CD8-positive, alpha-beta T cell (primary cell): ENCODE measurements at regions of chr1 and their contacts with region 1.

Region 1: GRCh38 chr1:181189691-181190363 is 101.3 kb downstream of the IER5 start:
- DNase-seq: peak; percentile 61 to 91 (median 76)
- ATAC-seq: peak; percentile 94
- H3K4me3 ChIP-seq: peak overlapping the region in 1 of 2 experiments; percentile 24
- H3K4me3 Mint-ChIP-seq: peak overlapping the region; percentile 42
- H3K27ac ChIP-seq: no peak overlapping the region
- H3K27ac Mint-ChIP-seq: no peak overlapping the region
- H3K4me1 ChIP-seq: peaks cover 11% of the 10 kb centered on the region
- H3K4me1 Mint-ChIP-seq: peaks cover 8% of the 10 kb centered on the region
- H3K27me3 ChIP-seq: no peaks in the 10 kb centered on the region
- H3K27me3 Mint-ChIP-seq: peaks cover 19% of the 10 kb centered on the region
- CTCF ChIP-seq: peak; percentile 94

Region 2: GRCh38 chr1:181173761-181174447 is 15.9 kb before region 1 on chr1:
- CTCF ChIA-PET with region 1: interaction called, 14 read pairs
- POLR2A ChIA-PET with region 1: no interaction called
- intact Hi-C with region 1: no loop called
- DNase-seq: no peak
- ATAC-seq: no peak
- H3K4me3 ChIP-seq: no peak overlapping the region
- H3K4me3 Mint-ChIP-seq: no peak overlapping the region
- H3K27ac ChIP-seq: no peak overlapping the region
- H3K27ac Mint-ChIP-seq: no peak overlapping the region
- H3K4me1 ChIP-seq: no peaks in the 10 kb centered on the region
- H3K4me1 Mint-ChIP-seq: peaks cover 2% of the 10 kb centered on the region
- H3K27me3 ChIP-seq: no peaks in the 10 kb centered on the region
- H3K27me3 Mint-ChIP-seq: no peaks in the 10 kb centered on the region
- CTCF ChIP-seq: no peak

Region 3: GRCh38 chr1:181232532-181232931 is 42.7 kb after region 1 on chr1:
- CTCF ChIA-PET with region 1: no interaction called
- POLR2A ChIA-PET with region 1: no interaction called
- intact Hi-C with region 1: no loop called
- DNase-seq: no peak
- ATAC-seq: no peak
- H3K4me3 ChIP-seq: no peak overlapping the region
- H3K4me3 Mint-ChIP-seq: no peak overlapping the region
- H3K27ac ChIP-seq: no peak overlapping the region
- H3K27ac Mint-ChIP-seq: no peak overlapping the region
- H3K4me1 ChIP-seq: no peaks in the 10 kb centered on the region
- H3K4me1 Mint-ChIP-seq: no peaks in the 10 kb centered on the region
- H3K27me3 ChIP-seq: no peaks in the 10 kb centered on the region
- H3K27me3 Mint-ChIP-seq: no peaks in the 10 kb centered on the region
- CTCF ChIP-seq: no peak

Region 4: DNA sequence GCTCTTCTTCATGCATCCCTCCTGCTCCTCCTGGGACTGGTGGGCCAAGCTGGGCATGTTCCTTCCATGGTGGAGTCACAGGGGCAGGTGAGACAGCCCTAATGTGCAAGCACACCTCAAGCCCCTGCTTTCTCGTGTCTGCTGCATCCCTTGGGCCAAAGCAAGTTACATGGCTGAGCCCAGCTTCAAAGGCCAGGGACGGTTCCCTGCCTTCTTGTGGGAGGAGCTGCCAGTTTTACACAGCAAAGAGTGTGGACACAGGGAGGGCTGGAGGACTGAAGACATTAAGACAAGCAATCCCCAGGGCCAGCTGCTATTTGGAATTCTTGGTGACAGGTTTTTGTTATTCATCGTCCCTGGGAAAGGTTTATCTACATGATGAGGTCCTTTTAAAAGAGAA is 118.3 kb after region 1 on chr1:
- CTCF ChIA-PET with region 1: no interaction called
- POLR2A ChIA-PET with region 1: no interaction called
- intact Hi-C with region 1: no loop called
- DNase-seq: no peak
- ATAC-seq: no peak
- H3K4me3 ChIP-seq: no peak overlapping the region
- H3K4me3 Mint-ChIP-seq: no peak overlapping the region
- H3K27ac ChIP-seq: no peak overlapping the region
- H3K27ac Mint-ChIP-seq: no peak overlapping the region
- H3K4me1 ChIP-seq: no peaks in the 10 kb centered on the region
- H3K4me1 Mint-ChIP-seq: no peaks in the 10 kb centered on the region
- H3K27me3 ChIP-seq: no peaks in the 10 kb centered on the region
- H3K27me3 Mint-ChIP-seq: peaks cover 20% of the 10 kb centered on the region
- CTCF ChIP-seq: no peak

Region 5: GRCh38 chr1:181324797-181325616 is 135.2 kb after region 1 on chr1:
- CTCF ChIA-PET with region 1: interaction called, 7 read pairs
- POLR2A ChIA-PET with region 1: no interaction called
- intact Hi-C with region 1: loop called in 1 of 2 experiments (anchors 10 kb)
- DNase-seq: peak in 8 of 9 experiments; percentile 17 to 67 (median 27)
- ATAC-seq: peak; percentile 69
- H3K4me3 ChIP-seq: no peak overlapping the region
- H3K4me3 Mint-ChIP-seq: no peak overlapping the region
- H3K27ac ChIP-seq: no peak overlapping the region
- H3K27ac Mint-ChIP-seq: no peak overlapping the region
- H3K4me1 ChIP-seq: peaks cover 9% of the 10 kb centered on the region
- H3K4me1 Mint-ChIP-seq: peaks cover 16% of the 10 kb centered on the region
- H3K27me3 ChIP-seq: no peaks in the 10 kb centered on the region
- H3K27me3 Mint-ChIP-seq: peaks cover 5% of the 10 kb centered on the region
- CTCF ChIP-seq: no peak

Region 6: GRCh38 chr1:181417915-181418314 is 228.1 kb after region 1 on chr1:
- CTCF ChIA-PET with region 1: interaction called, 60 read pairs
- POLR2A ChIA-PET with region 1: no interaction called
- intact Hi-C with region 1: no loop called
- DNase-seq: no peak
- ATAC-seq: no peak
- H3K4me3 ChIP-seq: no peak overlapping the region
- H3K4me3 Mint-ChIP-seq: no peak overlapping the region
- H3K27ac ChIP-seq: no peak overlapping the region
- H3K27ac Mint-ChIP-seq: no peak overlapping the region
- H3K4me1 ChIP-seq: no peaks in the 10 kb centered on the region
- H3K4me1 Mint-ChIP-seq: no peaks in the 10 kb centered on the region
- H3K27me3 ChIP-seq: no peaks in the 10 kb centered on the region
- H3K27me3 Mint-ChIP-seq: no peaks in the 10 kb centered on the region
- CTCF ChIP-seq: no peak

Region 7: GRCh38 chr1:181430015-181430885 is 240.4 kb after region 1 on chr1:
- CTCF ChIA-PET with region 1: interaction called, 108 read pairs
- POLR2A ChIA-PET with region 1: interaction called, 6 read pairs
- intact Hi-C with region 1: loop called (anchors 1 kb)
- DNase-seq: peak in 1 of 9 experiments; percentile 41
- ATAC-seq: no peak
- H3K4me3 ChIP-seq: no peak overlapping the region
- H3K4me3 Mint-ChIP-seq: no peak overlapping the region
- H3K27ac ChIP-seq: no peak overlapping the region
- H3K27ac Mint-ChIP-seq: no peak overlapping the region
- H3K4me1 ChIP-seq: no peaks in the 10 kb centered on the region
- H3K4me1 Mint-ChIP-seq: no peaks in the 10 kb centered on the region
- H3K27me3 ChIP-seq: peaks cover 0 to 6% of the 10 kb centered on the region in 2 experiments
- H3K27me3 Mint-ChIP-seq: peaks cover 30% of the 10 kb centered on the region
- CTCF ChIP-seq: no peak